Posterior vena cava (tissue), 2 donors: ENCODE measurements at regions of chr17 and their contacts with region 1.

Region 1: DNA sequence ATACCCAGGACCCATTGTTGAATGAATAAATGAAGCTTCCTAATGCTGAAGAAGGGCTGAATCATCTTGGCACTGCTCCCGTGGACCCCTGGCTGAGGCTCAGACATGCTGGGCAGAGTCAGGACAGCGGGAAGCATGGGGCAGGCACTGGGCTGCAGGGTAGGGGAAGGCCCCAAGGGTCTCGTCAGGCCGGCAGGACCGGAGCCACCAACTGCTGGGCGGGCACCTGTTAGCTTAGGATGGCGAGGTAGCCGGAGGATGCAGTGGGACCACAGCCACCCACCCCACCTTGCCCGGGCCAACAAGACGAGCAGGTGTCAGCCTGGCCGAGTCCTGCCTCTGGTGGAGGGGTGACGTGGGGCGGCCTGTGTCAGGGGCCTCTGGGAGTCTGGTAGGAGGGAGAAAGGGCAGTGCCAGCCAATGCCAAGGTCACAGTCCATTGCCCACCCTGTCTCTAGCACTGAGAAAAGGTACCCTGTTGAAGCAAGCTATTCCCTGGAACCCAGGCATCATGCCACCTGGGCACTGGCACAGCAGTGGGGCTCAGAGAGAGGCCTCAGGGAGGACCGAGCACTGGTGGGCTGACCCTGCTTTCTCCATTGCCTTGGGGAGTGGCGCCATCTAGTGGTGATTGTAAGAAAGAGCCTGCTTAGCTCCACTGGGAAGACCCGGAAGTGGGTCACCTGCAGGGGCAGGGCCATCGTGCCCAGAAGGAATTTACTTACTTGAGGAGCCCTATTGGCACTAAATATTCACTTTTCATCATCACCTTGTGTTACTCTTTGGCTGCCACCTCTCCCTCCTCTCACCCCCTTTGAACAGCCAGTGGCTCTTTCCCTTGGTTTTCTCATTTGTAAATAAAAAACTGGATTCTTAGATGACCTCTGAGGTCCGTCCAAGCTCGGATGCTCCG is 3.0 kb upstream of the DLX3 start:
- DNase-seq: peak; percentile 89

Region 2: DNA sequence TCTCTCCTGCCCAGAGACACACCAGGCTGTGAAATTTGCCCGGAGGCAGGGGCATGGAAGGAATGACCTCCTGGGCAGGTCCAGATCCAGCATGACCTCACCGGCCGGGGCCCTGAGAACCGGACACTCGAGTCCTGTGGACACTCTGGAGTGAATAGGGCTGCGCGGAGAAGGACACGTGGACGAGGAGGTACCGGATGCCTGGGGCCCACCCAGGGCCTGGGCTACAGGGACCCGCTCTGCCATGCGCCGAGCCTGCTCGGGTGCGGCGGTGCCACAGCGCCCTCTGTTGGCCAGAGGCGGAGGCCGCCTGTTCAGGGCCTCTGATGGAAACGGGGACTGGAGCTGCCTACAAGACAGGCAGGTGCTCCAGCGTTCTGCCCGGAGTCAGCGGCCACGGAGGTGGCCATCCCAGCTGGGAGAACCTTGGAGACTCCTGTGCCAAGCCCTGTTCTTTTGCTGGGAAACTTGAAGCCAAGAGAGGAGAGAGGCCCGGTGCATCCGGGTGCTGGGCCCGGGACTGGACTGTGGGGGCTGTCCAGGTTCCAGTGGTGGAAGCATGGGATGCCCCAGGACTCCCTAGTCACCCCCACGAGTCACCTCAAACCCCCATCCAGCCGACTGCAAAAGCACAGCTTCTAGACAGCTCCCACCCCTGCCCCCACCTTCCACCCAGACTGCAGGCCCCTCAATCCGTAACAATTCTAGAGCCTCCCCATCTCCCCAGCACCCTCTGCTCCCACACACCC is 441.6 kb before region 1 on chr17:
- intact Hi-C with region 1: loop called (anchors 10 kb)
- DNase-seq: peak; percentile 93

Region 3: GRCh38 chr17:49567871-49568694 is 430.0 kb before region 1 on chr17:
- intact Hi-C with region 1: loop called in 1 of 2 experiments (anchors 10 kb)
- DNase-seq: peak; percentile 97

Region 4: DNA sequence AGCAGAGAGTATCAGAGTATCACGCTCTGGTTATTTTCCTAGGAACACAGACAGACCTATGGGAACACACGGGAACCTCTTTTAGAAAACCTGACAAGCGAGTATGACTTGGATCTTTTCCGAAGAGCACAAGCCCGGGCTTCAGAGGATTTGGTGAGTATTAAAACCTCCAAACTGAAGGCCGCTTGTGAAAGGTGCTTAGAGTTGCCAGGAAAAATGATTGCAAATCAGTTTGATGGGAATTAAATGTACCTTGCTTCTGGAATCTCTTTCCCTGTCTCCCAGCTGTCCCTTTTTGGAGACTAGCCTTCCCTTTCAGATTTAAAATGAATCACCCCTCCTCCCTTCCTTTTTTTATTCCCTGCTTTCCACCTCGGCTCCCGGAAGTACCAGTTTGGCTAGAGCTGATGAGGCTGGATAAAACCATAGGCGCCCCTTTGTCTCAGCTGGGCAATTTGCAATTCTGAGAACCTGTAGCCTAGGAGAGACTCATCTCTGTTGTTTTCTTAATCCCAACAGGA is 182.2 kb before region 1 on chr17:
- intact Hi-C with region 1: no loop called
- DNase-seq: no peak

Region 5: DNA sequence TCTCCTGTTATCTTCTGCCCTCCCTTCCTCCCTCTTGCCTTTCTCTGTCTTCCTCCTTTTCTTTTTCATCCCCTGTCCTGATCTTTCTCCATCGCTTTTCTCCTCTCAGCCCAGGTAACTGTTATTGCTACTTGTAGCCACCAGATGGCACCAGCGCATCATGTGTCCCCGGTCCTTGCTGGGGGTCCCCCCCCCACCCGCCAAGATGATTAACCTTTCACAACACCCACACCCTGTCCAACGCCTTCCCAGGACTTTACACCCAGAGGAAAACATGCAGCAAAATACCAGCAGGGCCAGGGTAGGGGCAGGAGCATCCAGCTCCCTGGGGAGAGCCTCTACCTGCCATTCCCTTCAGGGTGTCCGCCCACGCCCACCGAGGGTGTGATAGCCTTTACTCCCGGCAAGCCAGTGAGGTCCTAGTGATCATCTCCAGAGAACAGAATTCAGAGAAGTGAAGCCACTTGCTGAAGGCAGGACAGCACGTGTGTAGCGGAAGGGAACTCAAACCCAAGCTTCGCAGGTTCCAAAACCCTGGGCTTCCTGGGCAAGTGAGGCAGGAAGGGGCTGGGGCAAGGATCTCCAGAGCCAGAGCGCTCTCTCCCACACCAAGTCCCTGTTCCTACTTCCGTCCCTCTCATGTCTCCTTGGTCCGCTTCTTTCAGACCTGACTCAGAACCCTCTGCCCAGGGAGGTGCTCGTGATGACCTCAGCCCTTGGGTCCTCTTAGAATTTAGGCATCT is 136.7 kb before region 1 on chr17:
- intact Hi-C with region 1: loop called (anchors 2 to 5 kb)
- DNase-seq: peak; percentile 64

Region 6: DNA sequence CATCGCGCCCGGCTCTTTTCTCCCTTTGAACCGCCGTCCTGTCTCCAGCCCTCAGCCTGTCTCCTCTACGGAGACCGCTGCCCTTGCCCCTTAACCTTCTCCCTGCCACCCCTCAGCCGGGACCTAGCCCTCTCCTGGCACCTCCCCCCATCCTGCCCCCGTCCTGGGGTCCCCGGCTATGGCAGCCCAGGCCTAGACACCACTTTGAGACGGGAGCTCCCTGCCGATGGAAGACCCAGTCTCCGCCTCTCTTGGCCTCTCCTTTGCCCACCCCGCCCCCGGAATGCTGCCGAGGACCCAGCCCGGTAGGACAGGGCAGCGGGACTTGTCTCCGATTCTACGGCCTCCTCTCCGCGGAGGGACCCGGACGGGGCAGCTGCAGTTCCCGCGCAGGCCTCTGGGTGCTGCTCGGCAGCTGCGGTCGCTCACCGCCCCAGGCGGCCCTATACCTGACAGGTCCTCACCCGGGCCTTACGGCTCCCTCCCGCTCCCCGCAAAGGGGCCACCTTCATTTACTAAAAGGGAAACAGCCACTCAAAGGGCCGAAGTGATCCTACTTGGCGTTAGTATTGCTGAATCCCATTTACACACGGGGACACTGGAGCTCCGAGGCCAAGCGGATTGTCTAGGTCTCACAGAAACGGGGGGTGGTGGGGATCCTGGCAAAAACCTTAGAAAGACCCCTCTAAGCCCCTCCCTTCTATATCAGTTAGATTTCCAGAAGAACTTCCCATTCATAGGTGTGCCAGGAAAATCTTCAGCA is 117.6 kb before region 1 on chr17:
- intact Hi-C with region 1: loop called (anchors 1 to 5 kb)
- DNase-seq: peak; percentile 92

Region 7: DNA sequence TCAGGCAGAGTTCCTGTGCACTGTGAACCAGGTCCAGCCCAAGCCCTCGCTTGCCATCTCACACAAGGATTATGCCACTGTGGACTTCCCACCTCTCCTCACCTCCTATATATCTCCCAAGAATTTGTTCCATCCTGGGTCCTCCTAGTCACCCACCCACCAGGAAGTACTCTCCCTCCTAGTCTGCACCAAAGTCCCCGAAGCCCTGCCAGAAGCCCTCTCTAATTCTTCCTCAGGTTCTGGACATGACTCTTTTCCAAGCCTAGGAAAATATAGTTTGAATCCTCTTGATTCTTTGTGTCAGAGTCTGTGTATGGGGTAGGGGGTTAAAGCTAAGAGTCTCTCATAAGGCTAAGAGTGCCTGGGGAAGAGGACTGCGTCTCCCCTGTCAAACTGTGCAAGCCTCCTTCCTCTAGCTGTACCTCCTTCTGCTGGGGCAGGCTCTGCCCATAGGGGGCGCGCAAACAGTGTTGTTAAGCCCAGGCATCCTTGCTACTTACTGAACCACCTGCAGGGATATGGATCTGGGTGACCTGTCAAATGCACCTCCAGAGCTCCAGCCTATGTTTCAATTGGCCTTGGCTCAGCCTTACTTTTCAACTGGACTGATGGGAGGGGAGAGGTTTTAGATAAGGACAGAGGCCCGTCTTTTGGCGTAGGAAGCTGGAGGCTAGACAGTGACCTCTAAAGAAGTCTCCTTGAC is 45.7 kb before region 1 on chr17:
- intact Hi-C with region 1: loop called in 1 of 2 experiments (anchors 5 kb)
- DNase-seq: peak; percentile 92